GM12878 (cell line): ENCODE measurements at regions of chr10 and their contacts with region 1.

Region 1: GRCh38 chr10:15591431-15591830 is 128.3 kb downstream of the ITGA8 start:
- DNase-seq: no peak
- ATAC-seq: no peak
- H3K4me3 ChIP-seq: no peak overlapping the region
- H3K27ac ChIP-seq: no peak overlapping the region
- H3K4me1 ChIP-seq: no peaks in the 10 kb centered on the region
- H3K27me3 ChIP-seq: no peaks in the 10 kb centered on the region; a peak in 1 of 4 replicates
- CTCF ChIP-seq: no peak
- EP300 ChIP-seq: no peak
- POLR2A ChIP-seq: no peak
- RAD21 ChIP-seq: no peak

Region 2: GRCh38 chr10:15540727-15541126 is 50.7 kb before region 1 on chr10:
- CTCF ChIA-PET with region 1: no interaction called
- POLR2A ChIA-PET with region 1: no interaction called
- RAD21 ChIA-PET with region 1: no interaction called
- SMC1A ChIA-PET with region 1: no interaction called
- in situ Hi-C with region 1: no loop called
- intact Hi-C with region 1: no loop called
- DNase-seq: no peak
- ATAC-seq: no peak
- H3K4me3 ChIP-seq: no peak overlapping the region
- H3K27ac ChIP-seq: no peak overlapping the region
- H3K4me1 ChIP-seq: no peaks in the 10 kb centered on the region
- H3K27me3 ChIP-seq: peaks cover 0 to 2% of the 10 kb centered on the region in 2 experiments; a peak in 1 of 4 replicates
- CTCF ChIP-seq: no peak
- EP300 ChIP-seq: no peak
- POLR2A ChIP-seq: no peak
- RAD21 ChIP-seq: no peak

Region 3: DNA sequence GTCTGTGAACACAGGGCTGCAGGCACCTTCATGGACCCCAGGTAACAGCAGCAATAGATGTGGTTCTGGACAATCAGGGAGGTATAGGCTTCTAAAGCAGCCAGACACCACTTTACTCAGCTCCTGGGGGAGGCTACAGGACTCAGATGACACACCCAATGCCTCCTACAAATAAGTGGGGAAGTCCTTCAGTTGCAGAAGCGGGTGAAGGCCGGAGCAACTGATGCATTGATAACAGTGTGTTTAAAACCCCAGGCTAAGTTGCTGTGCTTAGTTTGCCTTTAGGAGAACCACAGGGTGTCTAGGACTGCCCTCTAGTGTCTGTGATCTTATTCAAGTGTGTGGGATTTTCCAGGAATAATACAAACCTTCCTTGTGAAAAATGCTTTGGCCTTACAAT is 134.2 kb after region 1 on chr10:
- CTCF ChIA-PET with region 1: no interaction called
- POLR2A ChIA-PET with region 1: no interaction called
- RAD21 ChIA-PET with region 1: no interaction called
- SMC1A ChIA-PET with region 1: no interaction called
- in situ Hi-C with region 1: no loop called
- intact Hi-C with region 1: loop called (anchors 5 kb)
- DNase-seq: no peak
- ATAC-seq: peak; percentile 54; the same call in 2 of the 3 replicates
- H3K4me3 ChIP-seq: no peak overlapping the region
- H3K27ac ChIP-seq: no peak overlapping the region
- H3K4me1 ChIP-seq: no peaks in the 10 kb centered on the region
- H3K27me3 ChIP-seq: no peaks in the 10 kb centered on the region; a peak in 1 of 4 replicates
- CTCF ChIP-seq: peak; percentile 40 to 61 (median 44); a peak in 4 of 6 replicates
- EP300 ChIP-seq: no peak
- POLR2A ChIP-seq: no peak
- RAD21 ChIP-seq: peak; percentile 68